PC-9 (cell line): ENCODE measurements at regions of chr2 and their contacts with region 1.

Region 1: GRCh38 chr2:222205136-222205535 is 93.7 kb downstream of the PAX3 start:
- DNase-seq: no peak
- H3K4me3 ChIP-seq: no peak overlapping the region
- H3K27ac ChIP-seq: no peak overlapping the region
- H3K4me1 ChIP-seq: no peaks in the 10 kb centered on the region
- H3K27me3 ChIP-seq: peaks cover 89% of the 10 kb centered on the region
- CTCF ChIP-seq: no peak

Region 2: DNA sequence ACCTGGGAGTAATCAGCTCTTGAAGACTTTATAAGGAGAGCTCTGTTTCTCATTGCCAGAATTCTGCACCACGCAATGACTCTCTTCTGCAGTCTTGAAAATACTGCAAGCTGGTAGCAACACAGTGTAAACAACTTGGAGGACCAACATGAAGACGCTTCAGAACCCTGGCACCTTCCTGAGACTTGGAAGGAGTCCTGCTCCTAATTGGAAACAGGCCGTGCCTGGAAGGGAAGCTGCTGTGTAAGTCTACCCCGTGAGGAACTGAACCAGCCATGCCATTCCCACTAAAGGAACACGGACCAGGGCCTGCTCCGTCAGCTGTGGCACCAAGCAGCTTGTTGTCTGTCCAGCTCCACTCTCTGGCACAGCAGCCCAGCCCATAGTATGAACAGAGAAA is 77.5 kb before region 1 on chr2:
- CTCF ChIA-PET with region 1: no interaction called
- POLR2A ChIA-PET with region 1: interaction called, 12 read pairs
- intact Hi-C with region 1: no loop called
- DNase-seq: no peak
- H3K4me3 ChIP-seq: no peak overlapping the region
- H3K27ac ChIP-seq: no peak overlapping the region
- H3K4me1 ChIP-seq: no peaks in the 10 kb centered on the region
- H3K27me3 ChIP-seq: peaks cover 10% of the 10 kb centered on the region; the same call in 1 of the 2 replicates
- CTCF ChIP-seq: no peak